ENCODE measurements at regions of chr18 and their contacts with region 1.

Region 1: GRCh38 chr18:12947355-12948041 is at the start of gene SEH1L:
- DNase-seq: peak; percentile 99
- CTCF ChIP-seq: no peak

Region 2: GRCh38 chr18:12376718-12377555 is 570.6 kb before region 1 on chr18 and contains the start of gene AFG3L2:
- in situ Hi-C with region 1: loop called (anchors 25 kb)
- DNase-seq: peak; percentile 99
- CTCF ChIP-seq: no peak

Region 3: DNA sequence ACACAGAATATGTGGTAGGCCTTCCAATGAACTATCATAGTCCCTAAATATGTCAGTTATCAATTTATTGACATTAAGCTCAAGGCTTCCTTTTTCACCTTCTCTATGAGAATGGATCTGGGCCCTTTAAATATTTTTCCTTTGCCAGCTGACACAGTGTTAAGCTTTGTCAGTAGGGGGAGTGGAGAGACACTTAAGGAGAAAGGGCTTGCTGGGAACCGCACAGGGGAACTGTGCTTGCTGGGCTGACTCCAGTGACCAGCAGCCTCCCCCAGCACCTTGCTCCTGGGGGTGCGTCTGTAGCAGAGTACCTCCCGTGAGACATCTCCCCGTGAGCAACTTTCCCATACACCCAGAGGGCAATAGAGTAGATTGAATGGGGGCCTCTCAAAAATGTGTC is 57.0 kb before region 1 on chr18:
- in situ Hi-C with region 1: loop called (anchors 10 kb)
- DNase-seq: no peak
- CTCF ChIP-seq: no peak

Region 4: DNA sequence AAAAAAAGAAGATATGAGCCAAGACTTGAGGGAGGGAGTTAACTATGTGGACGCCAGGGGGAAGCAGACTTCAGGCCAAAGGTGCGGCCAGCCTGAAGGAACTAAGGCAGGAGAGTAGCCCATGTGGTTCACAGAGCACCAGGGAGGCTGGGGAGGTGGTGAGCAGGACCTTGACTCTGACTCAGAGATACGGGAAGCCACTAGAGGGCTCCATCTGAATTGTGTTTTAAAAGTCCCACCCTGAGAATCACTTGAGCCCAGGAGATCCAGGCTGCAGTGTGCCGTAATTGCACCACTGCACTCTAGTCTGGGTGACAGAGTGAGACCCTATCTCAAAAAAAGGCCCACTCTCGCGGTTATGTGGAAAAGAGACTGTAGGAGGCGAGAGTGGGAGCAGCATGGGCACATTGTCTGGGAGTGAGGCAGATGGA is 56.0 kb after region 1 on chr18:
- in situ Hi-C with region 1: no loop called
- DNase-seq: no peak
- CTCF ChIP-seq: no peak

Measured in GM13976 (cell line).